Activated CD8-positive, alpha-beta T cell treated with anti-CD3 and anti-CD28 coated beads for 36 hours (primary cell): ENCODE measurements at regions of chr9 and their contacts with region 1.

Region 1: DNA sequence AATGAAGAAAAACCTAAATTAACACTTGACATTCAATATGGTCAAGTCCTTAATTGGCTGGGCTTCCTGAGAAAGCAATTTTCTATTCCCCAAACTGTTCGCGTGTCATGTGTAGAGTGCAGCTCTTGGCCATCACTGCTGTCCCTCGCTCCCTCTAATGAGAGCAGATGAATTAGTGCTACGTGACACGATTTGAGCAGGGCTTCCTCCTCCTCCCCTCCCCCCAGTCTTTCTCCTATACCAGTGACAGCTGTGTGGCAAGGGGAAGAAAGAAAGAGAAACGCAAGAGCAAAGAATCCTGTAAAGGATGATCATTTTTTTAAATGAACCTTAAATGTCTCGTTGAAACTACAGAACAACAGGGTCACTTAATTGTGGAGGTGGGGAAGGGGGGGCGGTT is 159.6 kb downstream of the BNC2 start:
- DNase-seq: no peak
- ATAC-seq: no peak
- H3K4me3 Mint-ChIP-seq: no peak overlapping the region
- H3K27ac Mint-ChIP-seq: no peak overlapping the region
- H3K4me1 Mint-ChIP-seq: no peaks in the 10 kb centered on the region
- H3K27me3 Mint-ChIP-seq: peaks cover 4% of the 10 kb centered on the region
- CTCF ChIP-seq: no peak

Region 2: GRCh38 chr9:16763946-16764345 is 53.1 kb after region 1 on chr9:
- CTCF ChIA-PET with region 1: no interaction called
- POLR2A ChIA-PET with region 1: no interaction called
- intact Hi-C with region 1: loop called (anchors 5 kb)
- DNase-seq: no peak
- ATAC-seq: no peak
- H3K4me3 Mint-ChIP-seq: no peak overlapping the region
- H3K27ac Mint-ChIP-seq: no peak overlapping the region
- H3K4me1 Mint-ChIP-seq: no peaks in the 10 kb centered on the region
- H3K27me3 Mint-ChIP-seq: no peaks in the 10 kb centered on the region
- CTCF ChIP-seq: no peak